SK-N-SH (cell line): ENCODE measurements at regions of chr6 and their contacts with region 1.

Region 1: DNA sequence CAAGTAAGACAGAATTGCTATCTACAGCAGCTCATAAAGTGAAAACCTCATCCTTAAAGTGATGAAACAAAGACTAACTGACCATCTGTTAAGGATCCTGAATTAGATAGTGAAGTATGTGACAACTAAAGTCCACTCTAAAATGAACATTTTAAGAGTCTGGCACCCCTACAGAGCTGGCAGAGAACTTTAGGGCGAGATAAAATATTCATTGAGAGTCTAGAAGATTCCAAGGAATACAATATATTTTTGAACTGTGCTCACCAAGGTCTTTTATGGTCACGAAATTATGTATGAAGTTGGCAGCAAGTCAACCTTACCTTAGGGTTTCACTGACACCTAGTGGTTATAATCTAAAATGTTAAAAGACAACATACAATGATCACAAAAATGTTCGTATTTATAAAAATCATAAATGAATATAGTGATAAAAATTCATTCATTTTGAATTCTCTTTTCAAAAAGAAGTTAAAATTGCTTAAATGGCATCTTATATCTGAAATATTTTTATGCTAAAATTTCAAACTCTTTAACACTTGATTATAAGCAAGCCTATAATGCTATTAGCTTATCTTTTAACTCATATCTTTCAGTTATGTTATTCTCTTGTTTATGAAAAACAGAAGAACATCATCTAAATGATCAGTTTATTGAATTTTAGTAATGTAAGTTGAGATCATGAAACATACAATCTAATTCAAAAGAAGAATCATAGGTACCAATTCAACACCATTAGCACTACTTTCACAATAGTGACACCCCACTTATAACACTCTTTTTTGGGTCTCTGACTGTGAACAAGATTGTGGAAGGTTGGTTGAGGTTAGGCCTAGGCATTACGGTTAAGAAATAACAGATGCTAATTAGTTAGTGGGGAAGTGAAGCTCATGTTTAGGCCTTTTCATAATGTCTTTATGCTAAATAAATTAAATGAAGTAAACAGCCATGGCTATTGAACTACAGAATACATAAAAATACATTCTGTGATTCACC is 27.5 kb downstream of the RSPH3 start:
- DNase-seq: peak; percentile 47
- H3K4me3 ChIP-seq: no peak overlapping the region
- H3K27ac ChIP-seq: no peak overlapping the region
- H3K4me1 ChIP-seq: no peaks in the 10 kb centered on the region
- H3K27me3 ChIP-seq: no peaks in the 10 kb centered on the region
- CTCF ChIP-seq: peak; percentile 69
- EP300 ChIP-seq: no peak
- RAD21 ChIP-seq: peak; percentile 88

Region 2: DNA sequence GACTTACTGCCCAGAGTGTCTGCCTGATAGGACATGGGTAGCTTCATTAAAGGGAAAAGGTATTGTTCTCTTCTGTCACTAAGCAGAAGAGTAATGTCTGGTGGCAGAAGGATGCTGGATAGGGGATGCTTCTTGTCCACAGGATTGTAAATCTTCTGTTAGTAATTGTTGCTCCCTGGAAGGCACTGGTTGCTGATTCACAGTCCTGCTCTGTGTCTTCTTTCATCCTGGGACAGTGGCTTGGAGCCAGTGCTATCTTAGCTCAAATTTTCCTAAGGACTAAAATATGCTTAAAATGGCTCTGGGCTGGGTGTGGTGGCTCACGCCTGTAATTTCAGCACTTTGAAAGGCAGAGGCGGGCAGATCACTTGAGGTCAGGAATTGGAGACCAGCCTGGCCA is 274.7 kb before region 1 on chr6:
- CTCF ChIA-PET with region 1: interaction called, 138 read pairs
- POLR2A ChIA-PET with region 1: interaction called, 6 read pairs
- DNase-seq: no peak
- H3K4me3 ChIP-seq: no peak overlapping the region
- H3K27ac ChIP-seq: no peak overlapping the region
- H3K4me1 ChIP-seq: no peaks in the 10 kb centered on the region
- H3K27me3 ChIP-seq: no peaks in the 10 kb centered on the region
- CTCF ChIP-seq: no peak
- EP300 ChIP-seq: no peak
- RAD21 ChIP-seq: no peak

Region 3: GRCh38 chr6:158704181-158704822 is 268.2 kb before region 1 on chr6:
- CTCF ChIA-PET with region 1: interaction called, 138 read pairs
- POLR2A ChIA-PET with region 1: no interaction called
- DNase-seq: peak; percentile 93
- H3K4me3 ChIP-seq: peak overlapping the region; percentile 41 to 75
- H3K27ac ChIP-seq: no peak overlapping the region
- H3K4me1 ChIP-seq: peaks cover 15 to 28% of the 10 kb centered on the region in 2 experiments
- H3K27me3 ChIP-seq: no peaks in the 10 kb centered on the region
- CTCF ChIP-seq: peak; percentile 98
- EP300 ChIP-seq: no peak
- RAD21 ChIP-seq: peak; percentile 89

Region 4: DNA sequence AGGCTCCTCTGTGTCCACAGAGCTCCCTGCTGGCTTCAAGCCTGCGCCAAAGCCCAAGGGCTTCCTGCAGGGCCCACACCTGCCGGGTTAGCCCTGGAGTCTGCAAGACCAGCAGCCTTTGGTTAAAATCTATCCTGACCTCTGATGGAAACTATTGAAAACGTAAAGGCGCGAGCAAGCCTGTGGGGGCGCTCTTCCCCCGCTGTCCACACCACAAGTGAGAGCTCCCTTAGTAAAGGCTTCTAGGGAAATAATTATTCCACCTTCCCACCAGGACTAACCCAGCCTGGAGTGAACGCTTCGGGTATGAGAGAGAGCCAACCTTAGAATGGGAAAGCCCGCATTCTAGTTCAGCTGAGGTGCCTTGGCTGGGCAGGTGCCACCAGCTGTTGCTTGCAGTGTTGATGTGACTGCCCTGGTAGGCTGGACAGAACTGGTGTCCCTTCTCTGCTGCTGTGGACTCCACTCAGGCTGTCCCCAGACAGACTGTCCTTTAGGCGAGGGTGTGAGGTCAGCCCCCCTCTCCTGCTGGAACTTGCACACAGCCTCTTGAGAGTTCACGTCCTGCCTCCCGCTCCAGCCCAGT is 254.0 kb before region 1 on chr6:
- CTCF ChIA-PET with region 1: interaction called, 18 read pairs
- POLR2A ChIA-PET with region 1: no interaction called
- DNase-seq: peak; percentile 59
- H3K4me3 ChIP-seq: no peak overlapping the region; a peak in 1 of 4 replicates
- H3K27ac ChIP-seq: no peak overlapping the region
- H3K4me1 ChIP-seq: peaks cover 2 to 15% of the 10 kb centered on the region in 2 experiments; a peak in 3 of 4 replicates
- H3K27me3 ChIP-seq: no peaks in the 10 kb centered on the region
- CTCF ChIP-seq: peak; percentile 56
- EP300 ChIP-seq: no peak
- RAD21 ChIP-seq: peak; percentile 59

Region 5: DNA sequence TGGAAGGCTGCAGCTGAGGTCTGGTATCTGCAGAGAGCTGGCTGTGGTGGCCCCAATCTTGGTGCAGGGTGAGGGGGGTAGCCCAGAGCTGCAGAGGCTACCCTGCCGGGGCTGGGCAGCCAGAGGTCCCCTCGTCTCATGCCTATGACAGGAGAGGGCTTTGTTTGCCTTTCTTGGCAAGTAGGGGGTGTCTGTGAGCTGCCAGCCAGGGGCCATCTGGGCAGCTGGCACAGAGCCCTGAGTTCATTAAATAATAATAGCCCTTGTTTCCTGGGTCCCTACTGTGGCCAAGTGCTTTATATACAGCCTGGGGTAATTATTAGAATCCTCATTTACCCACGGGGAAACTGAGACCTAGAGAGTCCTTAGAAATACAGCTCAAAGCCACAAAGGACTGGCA is 219.9 kb before region 1 on chr6:
- CTCF ChIA-PET with region 1: interaction called, 10 read pairs
- POLR2A ChIA-PET with region 1: no interaction called
- DNase-seq: peak; percentile 87
- H3K4me3 ChIP-seq: no peak overlapping the region
- H3K27ac ChIP-seq: peak overlapping the region in 1 of 2 experiments; percentile 82; a peak in 2 of 4 replicates
- H3K4me1 ChIP-seq: peaks cover 15 to 50% of the 10 kb centered on the region in 2 experiments; a peak in 3 of 4 replicates
- H3K27me3 ChIP-seq: no peaks in the 10 kb centered on the region
- CTCF ChIP-seq: peak; percentile 44
- EP300 ChIP-seq: peak in 1 of 2 experiments; percentile 84; a peak in 2 of 4 replicates
- RAD21 ChIP-seq: peak; percentile 70

Region 6: DNA sequence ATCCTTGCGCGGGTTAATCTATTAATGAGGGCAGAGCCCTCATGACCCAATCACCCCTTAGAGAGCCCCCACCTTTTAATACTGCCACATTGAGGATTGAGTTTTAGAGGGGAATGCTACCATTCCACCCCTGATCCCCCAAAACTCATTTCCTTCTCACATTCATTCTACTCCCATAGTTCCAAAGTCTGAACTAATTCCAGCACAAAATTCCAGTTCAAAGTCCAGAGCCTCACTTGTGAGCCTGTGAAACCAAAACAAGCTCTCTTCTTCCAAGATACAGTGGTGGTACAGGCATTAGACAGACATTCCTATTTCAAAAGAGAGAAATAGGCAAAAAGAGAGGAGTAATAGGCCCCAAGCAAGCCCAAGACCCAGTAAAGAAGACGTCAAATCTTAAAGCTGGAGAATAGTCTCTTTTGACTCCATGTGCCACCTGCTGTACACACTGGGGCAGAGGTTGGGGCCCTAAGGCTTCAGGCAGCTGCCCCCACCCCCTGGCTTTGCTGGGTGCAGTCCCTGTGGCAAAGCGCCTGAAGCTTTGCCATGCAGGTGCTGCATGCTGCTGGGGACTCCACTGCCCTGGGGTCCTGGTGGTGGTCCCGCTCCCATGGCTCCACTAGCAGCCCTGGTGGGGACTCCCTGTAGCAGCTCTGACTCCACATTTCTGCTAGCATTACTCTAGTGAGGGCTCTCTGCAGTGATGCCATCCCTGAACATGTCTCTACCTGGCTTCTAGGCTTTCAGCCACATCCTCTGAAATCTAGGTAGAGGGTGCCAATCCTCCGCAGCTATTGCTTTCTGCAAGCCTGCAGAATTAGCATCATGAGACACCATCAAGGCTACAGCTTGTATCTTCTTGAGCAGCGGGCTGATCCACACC is 13.8 kb before region 1 on chr6:
- CTCF ChIA-PET with region 1: interaction called, 11 read pairs
- POLR2A ChIA-PET with region 1: no interaction called
- DNase-seq: no peak
- H3K4me3 ChIP-seq: no peak overlapping the region
- H3K27ac ChIP-seq: no peak overlapping the region
- H3K4me1 ChIP-seq: no peaks in the 10 kb centered on the region; a peak in 1 of 4 replicates
- H3K27me3 ChIP-seq: no peaks in the 10 kb centered on the region
- CTCF ChIP-seq: no peak
- EP300 ChIP-seq: no peak
- RAD21 ChIP-seq: no peak

Region 7: DNA sequence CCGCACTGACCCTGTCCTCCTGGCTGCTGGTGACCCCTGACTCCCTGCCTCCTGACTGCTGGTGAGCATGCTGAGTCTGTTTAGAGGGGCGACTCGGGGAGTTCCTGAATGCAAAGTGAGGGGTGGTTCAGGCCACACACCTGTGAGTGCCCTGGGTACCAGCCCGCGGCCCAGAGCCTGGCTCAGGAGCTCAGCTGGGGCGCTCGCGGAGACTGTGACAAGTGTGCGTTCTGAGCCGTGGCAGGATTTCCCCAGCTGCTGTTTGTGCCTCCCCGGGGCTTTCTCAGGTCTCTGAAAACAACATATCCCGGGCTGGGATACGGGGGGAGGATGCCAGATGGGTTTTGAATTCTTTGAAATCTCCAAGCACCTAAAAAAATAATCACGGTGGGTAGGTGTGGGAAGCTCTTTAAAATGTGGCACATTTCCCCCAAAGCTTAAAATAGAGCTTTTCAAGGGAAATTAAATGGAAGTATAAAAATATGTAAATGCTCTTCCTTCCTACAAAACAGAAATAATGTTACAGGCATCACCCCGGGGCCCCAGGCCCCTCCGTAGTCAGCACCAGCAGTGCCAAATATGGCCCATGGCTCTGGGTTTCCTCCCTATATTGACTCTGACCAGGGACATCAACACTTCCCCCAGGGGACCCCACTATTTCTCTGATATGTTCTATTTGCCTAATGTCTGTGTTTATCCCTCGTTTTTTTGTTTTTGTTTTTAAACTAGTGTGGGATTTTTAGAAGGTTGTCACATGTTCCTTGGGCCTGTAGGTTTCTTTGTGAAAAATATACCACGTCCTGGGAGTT is 122.1 kb after region 1 on chr6:
- CTCF ChIA-PET with region 1: no interaction called
- POLR2A ChIA-PET with region 1: no interaction called
- DNase-seq: no peak
- H3K4me3 ChIP-seq: no peak overlapping the region
- H3K27ac ChIP-seq: no peak overlapping the region
- H3K4me1 ChIP-seq: no peaks in the 10 kb centered on the region
- H3K27me3 ChIP-seq: no peaks in the 10 kb centered on the region; the same call in 1 of the 2 replicates
- CTCF ChIP-seq: no peak
- EP300 ChIP-seq: no peak
- RAD21 ChIP-seq: no peak